ENCODE measurements at regions of chr2 and their contacts with region 1.

Region 1: DNA sequence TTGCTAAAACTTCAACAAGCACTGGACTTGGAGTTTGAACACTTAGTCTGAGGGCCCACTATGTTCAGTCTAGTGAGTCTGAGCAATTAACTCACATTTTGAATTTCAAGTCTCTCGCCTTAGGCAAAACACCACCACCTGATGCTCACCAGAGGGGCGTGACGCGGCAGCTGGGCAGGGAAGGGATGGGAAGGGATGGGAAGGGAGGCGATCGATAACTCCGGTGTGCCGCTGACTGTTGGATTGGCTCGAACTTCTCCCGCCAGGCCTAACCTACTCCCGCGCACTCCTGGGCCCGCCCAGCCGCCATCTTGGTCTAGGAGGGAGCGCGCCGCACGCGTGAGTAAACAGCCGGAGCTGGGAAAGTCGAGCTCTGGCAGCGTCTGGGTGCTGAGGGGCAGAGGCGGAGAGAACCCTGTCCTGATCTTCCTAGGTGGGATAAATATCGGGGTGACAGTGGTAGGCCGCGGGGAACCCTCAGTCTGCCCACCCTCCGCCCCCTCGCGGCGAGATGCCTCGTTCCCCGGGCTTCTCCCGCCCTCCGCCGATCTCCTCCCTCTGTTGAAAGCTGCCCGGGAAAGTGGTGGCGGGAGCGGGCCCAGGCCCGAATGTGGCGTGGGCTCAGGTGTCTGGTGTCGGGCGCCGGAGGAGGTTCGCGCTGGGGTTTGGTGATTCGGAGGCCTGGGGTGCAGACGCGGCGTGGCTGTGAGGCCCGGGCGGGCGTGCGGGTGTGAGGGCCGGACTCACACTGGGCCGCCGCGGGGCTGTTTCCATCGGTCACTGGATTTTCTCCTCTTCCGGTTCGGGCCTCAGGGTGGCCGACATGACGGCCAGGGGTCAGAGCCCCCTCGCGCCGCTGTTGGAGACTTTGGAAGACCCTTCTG is at the start of gene RIF1:
- DNase-seq: peak; percentile 96
- H3K4me3 ChIP-seq: peak within 1 kb of the TSS; percentile 69 to 99 (median 92)
- H3K27ac ChIP-seq: peak within 1 kb of the TSS; percentile 67 to 98 (median 93)
- H3K4me1 ChIP-seq: peaks cover 13 to 46% (median 21%) of the 10 kb centered on the region in 6 donors
- H3K27me3 ChIP-seq: no peaks in the 10 kb centered on the region
- CTCF ChIP-seq: peak; percentile 39 to 84 (median 75)
- POLR2A ChIP-seq: no peak
- total RNA-seq, gene RIF1: 37.4 to 47.5 (median 42.4) TPM

Region 2: GRCh38 chr2:151289369-151290088 is 120.3 kb before region 1 on chr2 and contains the start of gene NMI:
- intact Hi-C with region 1: loop called (anchors 10 kb)
- DNase-seq: peak; percentile 95
- H3K4me3 ChIP-seq: peak within 1 kb of the TSS; percentile 50 to 94 (median 72)
- H3K27ac ChIP-seq: peak within 1 kb of the TSS; percentile 93 to 100 (median 100)
- H3K4me1 ChIP-seq: peaks cover 25 to 71% (median 47%) of the 10 kb centered on the region in 6 donors
- H3K27me3 ChIP-seq: no peaks in the 10 kb centered on the region
- CTCF ChIP-seq: no peak
- POLR2A ChIP-seq: peak in 1 of 3 donors; percentile 31
- total RNA-seq, gene NMI: 31.6 to 43.6 (median 41.3) TPM

Measured in spleen (tissue), 13 donors.